B cell (primary cell): ENCODE measurements at regions of chr7 and their contacts with region 1.

Region 1: DNA sequence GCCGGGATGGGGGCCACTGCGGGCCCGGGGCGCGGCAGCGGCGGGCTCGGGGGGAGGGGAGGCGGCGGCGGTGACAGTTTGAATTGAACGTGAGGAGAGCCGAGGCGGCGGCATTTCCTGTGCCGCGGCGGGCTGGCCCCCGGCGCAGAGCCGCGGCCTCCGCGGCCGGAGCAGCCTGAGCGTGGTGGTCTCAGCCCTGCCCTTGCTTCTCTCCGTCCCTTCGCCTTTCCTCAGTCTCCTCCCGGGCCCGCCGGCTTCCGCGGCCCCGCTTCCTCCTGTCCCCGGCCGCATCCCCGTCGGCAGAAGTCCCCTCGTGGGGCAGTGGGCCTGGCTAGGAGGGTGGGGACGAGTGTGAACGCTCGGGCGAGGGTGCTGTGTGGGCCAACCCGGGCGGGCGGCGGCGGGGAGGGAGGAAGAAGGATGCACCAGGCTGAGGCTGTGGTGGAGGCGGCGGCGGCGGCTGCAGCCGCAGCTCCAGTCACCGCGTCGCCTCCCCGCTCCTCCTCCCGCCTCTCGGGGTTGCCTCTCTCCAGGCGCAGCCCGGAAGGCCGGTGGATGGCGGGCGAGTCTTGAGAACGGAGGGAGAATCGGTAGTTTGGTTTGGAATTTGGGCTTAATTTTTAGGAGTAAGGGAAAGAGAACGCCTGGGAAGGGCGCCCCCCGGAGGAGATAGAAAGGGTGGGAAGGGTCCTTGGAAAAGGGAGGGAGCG is 690 bp downstream of the SEPTIN7 start:
- DNase-seq: peak; percentile 90
- ATAC-seq: peak; percentile 24
- H3K4me3 ChIP-seq: peak overlapping the region; percentile 75 to 91 (median 80)
- H3K4me3 Mint-ChIP-seq: peak overlapping the region; percentile 92
- H3K27ac ChIP-seq: peak overlapping the region; percentile 97 to 99
- H3K27ac Mint-ChIP-seq: peak overlapping the region; percentile 100
- H3K4me1 ChIP-seq: peaks cover 21 to 44% of the 10 kb centered on the region in 2 donors
- H3K4me1 Mint-ChIP-seq: peaks cover 55% of the 10 kb centered on the region
- H3K27me3 ChIP-seq: no peaks in the 10 kb centered on the region
- H3K27me3 Mint-ChIP-seq: no peaks in the 10 kb centered on the region
- CTCF ChIP-seq: peak; percentile 28

Region 2: GRCh38 chr7:35037526-35038339 is 763.8 kb before region 1 on chr7:
- CTCF ChIA-PET with region 1: no interaction called
- POLR2A ChIA-PET with region 1: no interaction called
- intact Hi-C with region 1: loop called (anchors 10 kb)
- DNase-seq: peak; percentile 96
- ATAC-seq: peak; percentile 85
- H3K4me3 ChIP-seq: peak overlapping the region; percentile 50 to 89 (median 76)
- H3K4me3 Mint-ChIP-seq: peak overlapping the region; percentile 95
- H3K27ac ChIP-seq: peak overlapping the region in 1 of 2 donors; percentile 63
- H3K27ac Mint-ChIP-seq: peak overlapping the region; percentile 89
- H3K4me1 ChIP-seq: peaks cover 15 to 18% of the 10 kb centered on the region in 2 donors
- H3K4me1 Mint-ChIP-seq: peaks cover 25% of the 10 kb centered on the region
- H3K27me3 ChIP-seq: no peaks in the 10 kb centered on the region
- H3K27me3 Mint-ChIP-seq: no peaks in the 10 kb centered on the region
- CTCF ChIP-seq: peak; percentile 87

Region 3: DNA sequence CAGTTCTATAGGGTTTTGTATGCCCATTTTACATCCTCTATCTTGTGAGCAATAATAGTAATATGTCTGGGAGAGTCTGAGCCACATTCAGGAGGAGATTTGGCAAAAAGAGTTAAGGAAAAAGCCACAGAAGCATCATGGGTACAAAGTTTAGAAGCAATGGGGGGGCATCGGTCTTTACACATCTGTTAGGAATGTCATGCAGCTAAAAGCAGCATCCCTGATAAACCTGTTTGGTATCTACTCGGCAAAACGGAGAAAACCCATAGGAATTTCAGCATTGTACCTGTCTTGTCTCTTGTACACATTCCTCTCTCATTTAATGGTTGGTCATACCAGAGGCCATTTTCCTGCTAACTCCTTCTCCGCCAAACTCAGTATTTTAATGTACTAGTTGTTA is 94.1 kb before region 1 on chr7:
- CTCF ChIA-PET with region 1: interaction called, 96 read pairs
- POLR2A ChIA-PET with region 1: interaction called, 16 read pairs
- intact Hi-C with region 1: loop called (anchors 1 kb)
- DNase-seq: no peak
- ATAC-seq: no peak
- H3K4me3 ChIP-seq: no peak overlapping the region
- H3K4me3 Mint-ChIP-seq: no peak overlapping the region
- H3K27ac ChIP-seq: no peak overlapping the region
- H3K27ac Mint-ChIP-seq: no peak overlapping the region
- H3K4me1 ChIP-seq: peaks cover 8 to 12% of the 10 kb centered on the region in 2 donors
- H3K4me1 Mint-ChIP-seq: peaks cover 7% of the 10 kb centered on the region
- H3K27me3 ChIP-seq: no peaks in the 10 kb centered on the region
- H3K27me3 Mint-ChIP-seq: no peaks in the 10 kb centered on the region
- CTCF ChIP-seq: no peak

Region 4: GRCh38 chr7:35729061-35729783 is 72.3 kb before region 1 on chr7:
- CTCF ChIA-PET with region 1: interaction called, 76 read pairs
- POLR2A ChIA-PET with region 1: interaction called, 167 read pairs
- intact Hi-C with region 1: loop called (anchors 1 kb)
- DNase-seq: peak; percentile 92
- ATAC-seq: peak; percentile 78
- H3K4me3 ChIP-seq: peak overlapping the region in 4 of 5 experiments; percentile 12 to 56 (median 28)
- H3K4me3 Mint-ChIP-seq: peak overlapping the region; percentile 79
- H3K27ac ChIP-seq: peak overlapping the region; percentile 93 to 99
- H3K27ac Mint-ChIP-seq: peak overlapping the region; percentile 99
- H3K4me1 ChIP-seq: peaks cover 73 to 77% of the 10 kb centered on the region in 2 donors
- H3K4me1 Mint-ChIP-seq: peaks cover 78% of the 10 kb centered on the region
- H3K27me3 ChIP-seq: no peaks in the 10 kb centered on the region
- H3K27me3 Mint-ChIP-seq: no peaks in the 10 kb centered on the region
- CTCF ChIP-seq: no peak

Region 5: GRCh38 chr7:35823440-35823839 is 21.9 kb after region 1 on chr7:
- CTCF ChIA-PET with region 1: interaction called, 8 read pairs
- POLR2A ChIA-PET with region 1: no interaction called
- intact Hi-C with region 1: loop called (anchors 2 kb)
- DNase-seq: no peak
- ATAC-seq: no peak
- H3K4me3 ChIP-seq: no peak overlapping the region
- H3K4me3 Mint-ChIP-seq: no peak overlapping the region
- H3K27ac ChIP-seq: no peak overlapping the region
- H3K27ac Mint-ChIP-seq: no peak overlapping the region
- H3K4me1 ChIP-seq: peaks cover 20 to 28% of the 10 kb centered on the region in 2 donors
- H3K4me1 Mint-ChIP-seq: peaks cover 40% of the 10 kb centered on the region
- H3K27me3 ChIP-seq: no peaks in the 10 kb centered on the region
- H3K27me3 Mint-ChIP-seq: no peaks in the 10 kb centered on the region
- CTCF ChIP-seq: no peak

Region 6: GRCh38 chr7:36152756-36153570 is 351.4 kb after region 1 on chr7 and contains the start of gene EEPD1:
- CTCF ChIA-PET with region 1: no interaction called
- POLR2A ChIA-PET with region 1: no interaction called
- intact Hi-C with region 1: loop called (anchors 2 kb)
- DNase-seq: peak; percentile 100
- ATAC-seq: peak; percentile 91
- H3K4me3 ChIP-seq: peak within 1 kb of the TSS; percentile 51 to 79 (median 72)
- H3K4me3 Mint-ChIP-seq: peak within 1 kb of the TSS; percentile 88
- H3K27ac ChIP-seq: peak within 1 kb of the TSS in 1 of 2 donors; percentile 40
- H3K27ac Mint-ChIP-seq: peak within 1 kb of the TSS; percentile 67
- H3K4me1 ChIP-seq: peaks cover 12% of the 10 kb centered on the region in 2 donors
- H3K4me1 Mint-ChIP-seq: peaks cover 16% of the 10 kb centered on the region
- H3K27me3 ChIP-seq: peaks cover 0 to 19% (median 2%) of the 10 kb centered on the region in 4 experiments
- H3K27me3 Mint-ChIP-seq: peaks cover 5% of the 10 kb centered on the region
- CTCF ChIP-seq: no peak
- total RNA-seq, gene EEPD1: 3.8 and 4.1 TPM in 2 replicates

Region 7: DNA sequence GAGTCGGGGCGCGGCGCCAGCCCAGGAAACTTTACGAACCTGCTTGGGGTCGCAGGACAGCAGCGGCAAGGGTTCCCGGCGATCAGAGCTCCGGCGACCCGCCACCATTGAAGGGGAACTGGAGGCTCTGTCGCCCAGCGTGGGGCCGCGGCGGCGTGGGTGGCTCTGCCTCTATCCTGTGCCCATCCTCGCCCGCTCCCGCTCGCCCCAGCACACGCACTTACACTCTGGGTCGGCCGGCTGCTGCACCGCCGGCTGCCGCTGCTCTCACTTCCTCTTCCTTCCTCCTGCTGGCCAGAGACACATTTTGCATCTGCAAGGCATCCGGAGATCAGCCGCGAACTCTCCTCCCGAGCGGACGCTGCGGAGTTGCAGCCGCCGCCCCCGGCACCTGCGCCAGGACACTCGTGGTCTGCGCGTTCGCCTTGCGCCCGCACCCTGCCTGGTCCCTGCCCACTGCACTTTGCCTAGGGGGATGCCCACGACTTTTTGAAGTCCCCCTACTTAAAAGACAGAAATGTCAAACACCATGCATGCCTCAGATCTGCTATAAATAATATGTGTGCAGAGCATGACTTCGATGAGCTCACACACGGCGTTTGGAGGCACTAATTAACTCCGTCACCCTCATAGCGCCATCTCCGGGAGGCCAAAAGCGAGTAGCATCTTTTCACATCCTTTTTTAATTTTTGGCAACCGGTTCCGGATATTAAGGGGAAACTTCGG is 1647.3 kb after region 1 on chr7 and contains the start of gene ELMO1:
- CTCF ChIA-PET with region 1: no interaction called
- POLR2A ChIA-PET with region 1: no interaction called
- intact Hi-C with region 1: loop called (anchors 5 kb)
- DNase-seq: peak; percentile 95
- ATAC-seq: peak; percentile 79
- H3K4me3 ChIP-seq: peak within 1 kb of the TSS; percentile 68 to 94 (median 83)
- H3K4me3 Mint-ChIP-seq: peak within 1 kb of the TSS; percentile 94
- H3K27ac ChIP-seq: peak within 1 kb of the TSS; percentile 83 to 93
- H3K27ac Mint-ChIP-seq: peak within 1 kb of the TSS; percentile 99
- H3K4me1 ChIP-seq: peaks cover 16 to 18% of the 10 kb centered on the region in 2 donors
- H3K4me1 Mint-ChIP-seq: peaks cover 47% of the 10 kb centered on the region
- H3K27me3 ChIP-seq: no peaks in the 10 kb centered on the region
- H3K27me3 Mint-ChIP-seq: no peaks in the 10 kb centered on the region
- CTCF ChIP-seq: peak; percentile 37
- total RNA-seq, gene ELMO1: 166 and 177 TPM in 2 replicates